ENCODE measurements at regions of chr15 and their contacts with region 1.

Region 1: DNA sequence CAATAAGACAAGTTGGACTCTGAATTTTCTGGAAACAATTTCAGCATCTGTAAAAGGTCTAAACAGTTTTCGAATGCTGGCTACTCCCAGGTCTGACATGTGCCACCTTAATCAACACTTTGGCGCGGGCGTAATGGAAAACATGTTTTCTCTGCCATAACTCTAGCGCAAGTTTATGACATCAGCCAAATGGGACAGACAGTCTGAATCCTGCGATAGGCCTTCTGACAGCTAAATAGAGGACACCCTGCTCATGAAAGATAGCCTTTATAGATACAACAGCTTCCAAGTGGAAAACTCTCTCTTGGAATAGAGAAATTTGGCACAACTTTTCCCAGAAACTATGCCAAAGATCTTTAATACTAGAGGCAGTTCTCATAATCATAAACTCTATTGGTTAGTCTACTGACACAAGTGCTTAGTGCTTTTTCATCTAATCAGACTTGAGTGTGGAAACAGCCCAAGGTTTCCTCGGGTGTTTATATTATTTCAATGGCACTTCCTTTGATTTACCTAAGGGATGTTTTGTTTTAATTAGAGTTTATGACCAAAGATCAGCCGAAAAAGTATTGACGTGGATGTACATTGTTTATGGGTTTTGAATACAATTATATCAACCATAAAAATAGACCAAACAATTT is 120.1 kb upstream of the DPH6 start:
- DNase-seq: peak in 4 of 5 donors; percentile 67 to 81 (median 78)
- ATAC-seq: peak; percentile 96 to 97 (median 96)
- H3K4me3 ChIP-seq: no peak overlapping the region
- H3K27ac ChIP-seq: peak overlapping the region; percentile 49 to 88 (median 82)
- H3K4me1 ChIP-seq: peaks cover 3 to 46% (median 24%) of the 10 kb centered on the region in 12 donors
- H3K27me3 ChIP-seq: no peaks in the 10 kb centered on the region
- CTCF ChIP-seq: no peak
- POLR2A ChIP-seq: no peak

Region 2: DNA sequence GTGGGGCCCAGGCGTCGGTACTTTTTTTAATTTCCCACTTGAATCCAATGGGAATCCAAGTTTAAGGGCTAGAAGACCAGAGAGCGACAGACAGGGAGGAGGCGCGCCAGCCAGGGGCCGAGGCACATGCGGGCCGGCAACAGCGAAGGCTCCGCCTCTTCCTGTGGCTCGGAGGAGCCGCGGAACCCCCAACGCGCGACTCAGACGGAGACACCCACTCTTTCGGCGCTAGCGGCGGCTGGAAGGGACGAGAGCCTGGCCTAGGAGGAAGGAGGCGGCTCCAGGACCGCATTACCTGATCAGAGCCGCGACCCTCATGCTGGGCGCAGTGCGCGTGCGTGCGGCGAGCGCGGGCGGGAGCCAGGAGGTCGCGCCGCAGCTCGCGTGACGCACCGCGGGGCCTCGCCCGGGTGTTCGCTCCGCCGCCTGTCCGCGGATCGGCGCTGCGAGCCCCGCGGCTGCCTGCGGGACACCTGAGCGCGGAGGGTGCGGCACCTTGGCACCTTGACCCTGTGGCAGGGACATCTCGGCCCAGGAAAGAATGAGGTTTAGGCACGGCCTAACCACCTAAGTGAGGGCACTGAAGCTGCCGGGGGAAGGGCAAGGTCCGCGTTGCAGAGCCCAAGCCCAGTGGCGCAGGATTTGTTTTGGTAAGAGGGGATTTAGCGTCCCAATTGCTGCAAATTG is 120.0 kb before region 1 on chr15 and contains the start of gene DPH6:
- intact Hi-C with region 1: loop called in 9 of 10 experiments (anchors 1 to 10 kb)
- DNase-seq: peak; percentile 85 to 93 (median 90)
- ATAC-seq: peak; percentile 92 to 96 (median 95)
- H3K4me3 ChIP-seq: peak within 1 kb of the TSS; percentile 62 to 97 (median 80)
- H3K27ac ChIP-seq: peak within 1 kb of the TSS; percentile 96 to 100 (median 99)
- H3K4me1 ChIP-seq: peaks cover 0 to 25% (median 16%) of the 10 kb centered on the region in 12 donors
- H3K27me3 ChIP-seq: no peaks in the 10 kb centered on the region
- CTCF ChIP-seq: peak in 5 of 12 donors; percentile 10 to 32 (median 18)
- POLR2A ChIP-seq: peak in 1 of 2 donors; percentile 85
- total RNA-seq, gene DPH6: 7.7 to 24.8 (median 16.0) TPM

Region 3: GRCh38 chr15:35630526-35630925 is 35.5 kb before region 1 on chr15:
- intact Hi-C with region 1: loop called in 1 of 10 experiments (anchors 5 kb)
- DNase-seq: peak in 4 of 5 donors; percentile 10 to 43 (median 34)
- ATAC-seq: peak; percentile 79 to 95 (median 92)
- H3K4me3 ChIP-seq: no peak overlapping the region
- H3K27ac ChIP-seq: peak overlapping the region in 7 of 12 donors; percentile 13 to 72 (median 43)
- H3K4me1 ChIP-seq: peaks cover 0 to 22% (median 11%) of the 10 kb centered on the region in 12 donors
- H3K27me3 ChIP-seq: no peaks in the 10 kb centered on the region
- CTCF ChIP-seq: no peak
- POLR2A ChIP-seq: no peak

Region 4: DNA sequence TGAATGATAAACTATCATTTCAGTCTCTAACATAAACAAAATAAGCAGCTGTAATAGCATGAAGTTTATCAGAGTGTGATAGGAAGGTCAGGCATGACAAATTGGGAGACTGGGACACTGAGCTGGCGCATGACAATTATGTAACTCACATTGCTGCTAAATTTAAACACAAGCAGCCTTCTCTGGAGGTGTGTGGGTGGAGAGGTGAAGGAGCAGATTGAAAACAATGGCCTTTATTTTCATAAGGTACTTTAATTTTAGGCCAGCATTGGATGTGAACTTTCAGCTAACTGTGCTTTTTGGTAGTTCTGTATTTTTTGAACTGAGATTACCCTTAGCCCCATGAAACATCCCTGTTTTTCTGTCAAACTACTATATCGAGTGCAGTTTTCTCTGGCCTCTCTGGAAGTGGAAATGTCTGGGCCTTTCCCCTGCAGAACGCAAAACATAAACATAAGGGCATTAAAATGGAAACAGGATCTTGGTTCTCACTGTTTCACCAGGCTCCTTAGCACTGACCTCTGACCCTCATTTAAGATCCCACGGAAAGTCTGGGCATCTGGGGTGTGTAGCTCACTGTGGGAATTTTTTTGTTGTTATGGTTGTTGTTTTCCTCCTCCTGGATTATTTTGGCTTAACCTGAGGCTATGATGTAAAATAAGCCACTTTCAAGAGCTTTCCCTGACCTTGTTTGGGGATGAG is 40.0 kb after region 1 on chr15:
- intact Hi-C with region 1: loop called in 2 of 10 experiments (anchors 5 kb)
- DNase-seq: peak in 4 of 5 donors; percentile 50 to 54 (median 52)
- ATAC-seq: peak; percentile 95 to 97 (median 96)
- H3K4me3 ChIP-seq: no peak overlapping the region
- H3K27ac ChIP-seq: peak overlapping the region; percentile 51 to 93 (median 78)
- H3K4me1 ChIP-seq: peaks cover 0 to 33% (median 18%) of the 10 kb centered on the region in 12 donors
- H3K27me3 ChIP-seq: no peaks in the 10 kb centered on the region
- CTCF ChIP-seq: no peak
- POLR2A ChIP-seq: no peak

Region 5: DNA sequence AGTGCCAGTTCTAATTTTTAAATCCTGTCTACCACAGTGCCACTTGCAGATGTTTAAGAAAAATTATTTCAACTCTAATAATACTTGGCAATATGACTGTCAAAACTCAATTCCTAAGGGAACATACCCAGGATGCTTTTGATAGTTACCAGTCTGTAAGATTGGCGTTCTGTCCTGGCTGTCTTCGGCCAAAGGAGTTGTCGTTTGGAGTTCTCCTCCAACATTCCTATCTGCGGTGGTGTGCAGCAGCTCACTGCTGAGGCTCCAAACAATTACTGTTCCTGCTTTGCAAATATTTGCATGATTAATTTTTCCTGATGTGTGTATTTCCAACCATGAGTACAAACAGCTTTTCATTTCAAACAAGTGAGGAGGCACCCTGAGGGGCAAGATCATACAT is 210.7 kb after region 1 on chr15:
- intact Hi-C with region 1: no loop called
- DNase-seq: no peak
- ATAC-seq: no peak
- H3K4me3 ChIP-seq: no peak overlapping the region
- H3K27ac ChIP-seq: no peak overlapping the region
- H3K4me1 ChIP-seq: peaks cover 0 to 3% (median 0%) of the 10 kb centered on the region in 12 donors
- H3K27me3 ChIP-seq: no peaks in the 10 kb centered on the region
- CTCF ChIP-seq: no peak
- POLR2A ChIP-seq: no peak

Measured in heart left ventricle (tissue), 16 donors.